Spleen (tissue), 13 donors: ENCODE measurements at regions of chr3 and their contacts with region 1.

Region 1: DNA sequence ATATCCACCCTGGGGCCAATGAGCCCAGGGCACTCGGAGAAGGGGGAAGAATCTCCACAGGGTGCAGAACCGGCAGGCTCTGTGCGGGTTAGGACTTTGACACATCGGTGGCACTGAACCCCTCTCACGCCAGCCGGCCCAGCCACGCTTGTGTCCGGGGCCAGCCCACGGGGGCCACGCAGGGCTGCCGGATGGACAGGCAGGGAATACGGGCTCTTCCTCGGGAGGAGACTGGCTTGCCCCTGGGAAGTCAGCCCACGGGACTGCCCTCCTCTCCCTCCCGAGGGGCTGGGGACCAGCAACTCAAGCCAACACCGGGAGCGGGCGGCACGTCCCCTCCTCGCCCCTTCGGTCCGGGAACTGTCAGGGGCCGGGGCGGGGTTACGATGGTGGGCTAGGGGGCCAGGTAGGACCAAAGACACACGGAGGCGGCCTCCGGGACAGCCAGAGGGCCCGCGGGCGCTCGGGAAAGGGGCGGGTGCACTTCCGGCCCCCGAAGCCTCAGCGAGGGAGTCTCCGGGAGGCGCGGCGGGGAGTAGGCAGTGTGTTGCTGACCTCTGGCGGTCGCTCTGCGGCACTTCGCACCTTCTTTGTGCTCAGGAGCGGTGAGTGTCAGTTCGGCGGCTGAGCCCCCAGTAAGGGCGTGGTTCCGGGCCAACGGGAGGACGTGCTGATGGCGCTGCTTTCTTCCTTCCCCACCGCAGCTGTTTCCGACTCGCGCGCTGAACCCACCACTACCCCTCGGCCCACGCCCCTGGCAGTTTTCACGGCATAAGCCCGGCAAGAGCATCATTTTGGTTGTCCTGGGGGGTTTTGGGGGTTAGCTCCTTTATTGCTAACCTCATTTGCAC is 5.1 kb upstream of the CYP8B1 start:
- DNase-seq: peak; percentile 97
- H3K4me3 ChIP-seq: peak overlapping the region; percentile 21 to 77 (median 46)
- H3K27ac ChIP-seq: peak overlapping the region in 6 of 8 donors; percentile 22 to 78 (median 69)
- H3K4me1 ChIP-seq: peaks cover 4 to 16% (median 13%) of the 10 kb centered on the region in 6 donors
- H3K27me3 ChIP-seq: no peaks in the 10 kb centered on the region
- CTCF ChIP-seq: peak; percentile 91 to 98 (median 94)
- POLR2A ChIP-seq: no peak

Region 2: GRCh38 chr3:42780892-42781700 is 99.7 kb before region 1 on chr3:
- intact Hi-C with region 1: loop called (anchors 2 kb)
- DNase-seq: no peak
- H3K4me3 ChIP-seq: no peak overlapping the region
- H3K27ac ChIP-seq: no peak overlapping the region
- H3K4me1 ChIP-seq: peaks cover 0 to 15% (median 4%) of the 10 kb centered on the region in 6 donors
- H3K27me3 ChIP-seq: no peaks in the 10 kb centered on the region
- CTCF ChIP-seq: peak; percentile 67 to 87 (median 81)
- POLR2A ChIP-seq: no peak

Region 3: DNA sequence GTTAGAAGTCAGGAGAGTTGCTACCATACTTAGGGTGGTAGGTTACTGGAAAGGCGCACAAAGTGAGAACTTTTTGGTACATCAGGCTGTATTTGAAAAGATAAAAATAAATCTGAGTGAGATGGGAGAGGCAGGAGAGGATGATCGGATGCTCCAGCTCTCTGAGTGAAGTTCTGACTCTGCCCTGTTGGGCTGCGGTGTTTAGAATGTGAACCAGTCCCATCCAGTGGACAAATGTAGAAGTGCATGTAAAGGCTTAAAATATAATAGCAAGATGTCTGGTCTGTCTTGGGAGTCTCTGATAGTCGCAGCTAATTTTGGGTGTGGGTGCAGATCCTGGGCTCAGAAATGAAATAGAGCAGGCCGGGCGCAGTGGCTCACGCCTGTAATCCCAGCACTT is 41.2 kb before region 1 on chr3:
- intact Hi-C with region 1: loop called (anchors 5 kb)
- DNase-seq: no peak
- H3K4me3 ChIP-seq: peak overlapping the region in 1 of 8 donors; percentile 28
- H3K27ac ChIP-seq: no peak overlapping the region
- H3K4me1 ChIP-seq: peaks cover 0 to 18% (median 8%) of the 10 kb centered on the region in 6 donors
- H3K27me3 ChIP-seq: no peaks in the 10 kb centered on the region
- CTCF ChIP-seq: peak; percentile 34 to 76 (median 70)
- POLR2A ChIP-seq: no peak